K562 (cell line): ENCODE measurements at regions of chr9 and their contacts with region 1.

Region 1: DNA sequence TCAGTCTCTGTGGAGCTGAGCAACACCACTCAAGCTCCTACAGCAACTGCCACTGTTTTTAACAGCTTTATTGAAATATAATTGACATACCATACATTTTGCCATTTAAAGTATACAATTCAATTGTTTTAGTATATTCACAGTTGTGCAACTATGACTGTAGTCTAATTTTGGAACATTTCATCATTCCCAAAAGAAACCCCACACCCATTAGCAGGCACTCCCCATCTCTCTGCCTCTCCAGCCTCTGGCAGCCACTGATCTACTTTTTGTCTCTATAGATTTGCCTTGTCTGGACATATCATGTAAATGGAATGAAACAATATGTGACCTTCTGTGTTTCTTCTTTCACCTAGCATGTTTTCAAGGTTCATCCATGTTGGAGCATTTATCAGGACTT is 43.5 kb downstream of the RUSC2 start:
- DNase-seq: no peak
- ATAC-seq: no peak
- H3K4me3 ChIP-seq: no peak overlapping the region
- H3K27ac ChIP-seq: no peak overlapping the region
- H3K4me1 ChIP-seq: no peaks in the 10 kb centered on the region
- H3K27me3 ChIP-seq: no peaks in the 10 kb centered on the region
- CTCF ChIP-seq: no peak
- EP300 ChIP-seq: no peak
- POLR2A ChIP-seq: no peak
- RAD21 ChIP-seq: no peak

Region 2: GRCh38 chr9:35518226-35518821 is 15.1 kb before region 1 on chr9:
- CTCF ChIA-PET with region 1: no interaction called
- POLR2A ChIA-PET with region 1: interaction called, 10 read pairs
- in situ Hi-C with region 1: no loop called
- intact Hi-C with region 1: no loop called
- DNase-seq: no peak
- ATAC-seq: no peak
- H3K4me3 ChIP-seq: no peak overlapping the region
- H3K27ac ChIP-seq: no peak overlapping the region
- H3K4me1 ChIP-seq: no peaks in the 10 kb centered on the region; a peak in 1 of 5 replicates
- H3K27me3 ChIP-seq: no peaks in the 10 kb centered on the region
- CTCF ChIP-seq: no peak
- EP300 ChIP-seq: no peak
- POLR2A ChIP-seq: no peak
- RAD21 ChIP-seq: no peak